ENCODE measurements at regions of chr14 and their contacts with region 1.

Region 1: GRCh38 chr14:22994762-22995275 is 12.5 kb upstream of the AJUBA start:
- DNase-seq: peak; percentile 32
- ATAC-seq: peak; percentile 87
- H3K4me3 Mint-ChIP-seq: no peak overlapping the region
- H3K27ac Mint-ChIP-seq: peak overlapping the region; percentile 91
- H3K4me1 Mint-ChIP-seq: peaks cover 5% of the 10 kb centered on the region
- H3K27me3 Mint-ChIP-seq: no peaks in the 10 kb centered on the region; the same call in 1 of the 2 replicates
- CTCF ChIP-seq: 0 out of 2 replicates have a peak, but pooled peaks have one; percentile 14

Region 2: GRCh38 chr14:22929104-22929847 is 65.5 kb before region 1 on chr14 and contains the start of gene PRMT5:
- CTCF ChIA-PET with region 1: interaction called, 12 read pairs
- POLR2A ChIA-PET with region 1: no interaction called
- DNase-seq: peak; percentile 97
- ATAC-seq: peak; percentile 96
- H3K4me3 Mint-ChIP-seq: no peak within 1 kb of the TSS
- H3K27ac Mint-ChIP-seq: no peak within 1 kb of the TSS; the same call in 1 of the 2 replicates
- H3K4me1 Mint-ChIP-seq: peaks cover 7% of the 10 kb centered on the region
- H3K27me3 Mint-ChIP-seq: no peaks in the 10 kb centered on the region
- CTCF ChIP-seq: no peak
- total RNA-seq, gene PRMT5: 119 to 124 TPM (median 123 TPM) in 3 replicates

Region 3: DNA sequence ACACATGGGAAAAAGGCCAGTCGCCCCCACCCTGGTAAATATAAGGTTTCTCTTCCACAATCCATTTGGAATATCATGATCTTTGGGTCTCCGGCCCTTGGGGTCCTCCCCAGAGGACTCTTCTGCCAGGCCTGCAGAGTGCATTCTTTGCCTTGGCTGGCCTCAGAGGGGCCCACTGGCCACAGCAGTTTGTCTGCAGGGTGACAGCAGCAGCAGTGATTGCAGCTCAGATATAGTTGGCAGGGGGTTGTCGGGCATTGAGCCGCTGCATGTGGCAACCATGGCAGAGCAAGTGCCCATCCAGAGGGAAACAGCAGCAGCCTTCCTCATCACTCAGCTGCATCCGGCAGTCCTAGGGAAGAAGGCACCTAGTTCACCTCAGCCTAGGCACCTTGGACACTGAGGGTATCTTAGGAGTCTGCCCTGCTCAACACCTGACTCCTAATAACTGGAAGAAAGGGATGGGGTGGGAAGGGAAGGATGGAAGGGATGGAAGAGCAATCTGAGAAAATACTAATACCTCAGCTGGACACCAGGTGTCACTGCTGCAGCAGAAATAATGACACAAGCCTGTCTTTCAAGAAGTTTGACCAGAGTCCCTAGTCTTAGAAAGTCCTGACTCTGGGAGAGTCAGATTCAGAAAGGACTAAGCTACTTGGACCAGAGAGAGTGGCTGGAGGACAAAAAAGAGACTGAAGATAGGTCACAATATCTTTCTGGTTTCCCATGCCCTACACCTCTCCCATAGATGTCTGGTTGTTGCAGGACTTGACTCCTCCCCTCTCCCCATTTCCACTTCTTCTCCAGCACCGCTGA is 21.4 kb before region 1 on chr14:
- CTCF ChIA-PET with region 1: interaction called, 30 read pairs
- POLR2A ChIA-PET with region 1: interaction called, 3 read pairs
- DNase-seq: peak; percentile 50
- ATAC-seq: peak; percentile 16
- H3K4me3 Mint-ChIP-seq: no peak overlapping the region
- H3K27ac Mint-ChIP-seq: peak overlapping the region; percentile 17
- H3K4me1 Mint-ChIP-seq: peaks cover 27% of the 10 kb centered on the region
- H3K27me3 Mint-ChIP-seq: no peaks in the 10 kb centered on the region
- CTCF ChIP-seq: peak; percentile 51

Region 4: DNA sequence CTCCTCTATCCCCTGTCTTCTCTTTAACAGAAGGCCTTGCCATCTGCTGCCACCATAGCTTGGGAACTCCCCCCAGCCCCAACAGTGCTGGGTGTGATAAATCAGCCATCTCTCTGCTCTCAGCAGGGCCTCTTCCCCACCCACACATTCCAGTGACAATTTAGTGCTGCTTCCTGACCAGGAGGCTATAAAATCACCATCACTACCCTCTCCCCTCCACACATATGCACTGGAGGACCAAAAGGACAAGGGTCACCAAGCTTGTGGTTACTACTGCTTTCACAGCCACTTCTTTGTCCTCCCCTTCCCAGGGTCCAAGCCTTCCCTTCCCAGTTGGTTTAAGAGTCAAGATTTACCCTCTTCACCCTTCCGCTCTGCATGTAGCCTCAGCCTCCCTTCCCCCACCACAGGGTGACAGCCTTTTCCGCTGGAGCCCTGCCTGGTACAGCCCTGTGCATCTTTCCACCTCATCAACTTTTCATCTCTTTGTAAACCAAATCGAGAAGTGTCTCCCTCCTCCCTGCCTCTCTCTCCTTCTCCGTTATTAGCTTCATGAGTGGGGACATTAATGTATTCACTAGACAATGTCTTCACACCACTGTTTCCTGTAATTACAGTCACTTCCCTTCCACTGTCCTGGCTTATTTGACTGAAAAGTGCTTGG is 30.5 kb after region 1 on chr14:
- CTCF ChIA-PET with region 1: interaction called, 24 read pairs
- POLR2A ChIA-PET with region 1: interaction called, 4 read pairs
- DNase-seq: no peak
- ATAC-seq: no peak
- H3K4me3 Mint-ChIP-seq: no peak overlapping the region
- H3K27ac Mint-ChIP-seq: peak overlapping the region; percentile 78
- H3K4me1 Mint-ChIP-seq: peaks cover 19% of the 10 kb centered on the region
- H3K27me3 Mint-ChIP-seq: no peaks in the 10 kb centered on the region
- CTCF ChIP-seq: no peak

Region 5: DNA sequence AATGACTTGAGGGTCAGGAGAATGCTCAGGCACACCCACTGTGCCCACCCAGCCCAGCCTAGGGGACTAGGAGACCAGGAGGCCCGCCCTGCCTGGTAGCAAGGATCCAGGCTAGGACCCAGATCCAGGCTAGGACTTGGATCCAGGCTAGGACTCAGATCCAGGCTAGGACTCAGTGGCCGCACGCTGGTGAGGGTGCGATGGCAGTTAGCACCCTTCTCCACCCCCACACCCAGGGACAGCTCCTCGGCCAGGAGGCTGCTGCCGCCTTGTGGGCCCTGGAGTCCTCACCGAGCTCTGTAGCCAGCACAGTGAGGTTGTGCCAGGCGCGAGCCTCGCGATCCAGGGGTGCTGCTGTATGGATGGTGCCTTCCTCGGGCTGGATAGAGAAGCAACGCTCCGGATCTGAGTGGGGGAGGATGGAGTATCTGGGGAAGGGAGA is 57.4 kb after region 1 on chr14:
- CTCF ChIA-PET with region 1: interaction called, 149 read pairs
- POLR2A ChIA-PET with region 1: interaction called, 4 read pairs
- DNase-seq: peak; percentile 68
- ATAC-seq: peak; percentile 55
- H3K4me3 Mint-ChIP-seq: no peak overlapping the region
- H3K27ac Mint-ChIP-seq: no peak overlapping the region
- H3K4me1 Mint-ChIP-seq: peaks cover 15% of the 10 kb centered on the region
- H3K27me3 Mint-ChIP-seq: peaks cover 5% of the 10 kb centered on the region; the same call in 1 of the 2 replicates
- CTCF ChIP-seq: no peak

Region 6: DNA sequence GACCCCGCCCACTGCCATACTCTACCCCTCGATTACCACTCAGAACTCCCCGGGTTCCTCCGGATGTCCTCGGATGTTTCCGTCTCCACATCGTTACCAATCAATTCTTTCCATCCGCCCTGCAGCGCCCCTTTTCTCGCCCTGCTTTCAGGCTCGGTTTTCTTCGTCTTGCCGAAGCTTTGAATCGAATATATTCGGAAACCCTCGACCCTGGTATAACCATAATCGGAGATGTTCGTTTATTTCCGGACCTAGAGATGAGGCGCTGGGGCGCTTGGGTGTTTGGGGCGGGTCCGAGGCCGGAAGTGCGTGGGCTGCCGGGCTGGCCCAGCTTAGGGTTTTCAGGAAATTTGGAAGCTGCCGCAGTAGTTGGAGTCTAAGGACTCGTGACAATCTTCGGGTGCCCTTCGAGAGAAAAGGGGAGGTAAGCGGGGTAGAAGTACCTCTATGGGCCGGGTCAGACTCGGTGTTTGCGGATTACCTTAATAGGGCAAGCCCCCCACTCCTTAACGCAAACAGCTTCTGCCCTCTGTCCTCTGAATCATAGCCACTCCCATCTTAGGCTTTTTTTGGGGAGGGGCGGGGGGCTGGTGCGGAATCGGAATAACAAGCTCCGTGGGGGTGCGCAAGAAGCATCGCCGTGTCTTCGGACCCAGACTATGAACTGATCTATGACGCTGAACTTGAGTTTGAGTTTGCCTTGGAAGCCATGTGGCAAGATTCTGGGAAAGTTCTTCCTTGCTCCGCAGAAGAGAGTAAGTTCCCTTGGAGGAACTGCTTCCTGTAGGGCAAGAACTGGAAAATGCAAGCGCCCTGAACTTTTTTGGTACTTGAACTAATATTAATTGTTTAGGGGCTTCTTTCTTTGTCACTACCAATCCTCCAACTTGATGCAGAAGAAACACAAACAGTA is 100.6 kb after region 1 on chr14 and contains the start of gene C14orf119:
- CTCF ChIA-PET with region 1: interaction called, 10 read pairs
- POLR2A ChIA-PET with region 1: no interaction called
- DNase-seq: peak; percentile 100
- ATAC-seq: peak; percentile 91
- H3K4me3 Mint-ChIP-seq: no peak within 1 kb of the TSS
- H3K27ac Mint-ChIP-seq: no peak within 1 kb of the TSS
- H3K4me1 Mint-ChIP-seq: peaks cover 37% of the 10 kb centered on the region
- H3K27me3 Mint-ChIP-seq: no peaks in the 10 kb centered on the region; the same call in 1 of the 2 replicates
- CTCF ChIP-seq: no peak
- total RNA-seq, gene C14orf119: 67.8 to 81.3 TPM (median 71.3 TPM) in 3 replicates